ENCODE measurements at regions of chr1 and their contacts with region 1.

Region 1: DNA sequence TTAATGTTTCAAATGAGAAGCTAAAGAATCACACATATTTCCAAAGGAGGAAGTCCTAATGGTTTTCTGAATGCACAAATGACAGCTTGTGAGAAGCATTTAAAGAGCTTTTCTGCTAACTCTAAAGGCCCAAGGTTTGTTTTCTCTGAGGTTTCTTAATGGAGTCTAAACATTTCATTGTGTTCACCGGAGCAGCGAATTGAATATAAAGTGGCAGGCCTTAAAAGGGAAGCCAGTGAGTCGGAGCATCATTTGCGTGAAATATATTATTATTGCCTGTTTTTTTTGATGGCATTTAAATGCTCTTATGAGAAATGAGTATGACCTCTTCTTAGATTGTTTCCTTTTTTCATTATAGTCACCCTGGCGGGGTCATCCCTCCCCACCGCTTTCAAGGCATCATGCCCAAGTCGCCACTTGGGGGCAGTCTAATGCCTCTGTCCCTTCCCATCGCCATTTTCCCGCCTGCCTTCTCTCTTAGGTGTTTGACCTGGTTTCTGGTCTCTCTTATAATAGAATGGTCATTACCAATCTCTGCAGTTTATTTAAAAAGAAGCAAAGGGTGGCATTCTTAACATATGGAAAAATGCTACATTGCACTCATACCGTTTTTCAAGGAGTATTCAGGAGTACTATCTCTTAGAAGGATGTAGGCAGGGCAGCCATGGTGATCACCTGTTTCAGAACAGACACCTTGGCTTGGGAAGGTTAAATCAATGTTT is 25.3 kb upstream of the OVAAL start:
- DNase-seq: peak; percentile 52 to 85 (median 75)
- ATAC-seq: peak; percentile 86
- H3K4me3 ChIP-seq: no peak overlapping the region
- H3K4me1 ChIP-seq: no peaks in the 10 kb centered on the region
- CTCF ChIP-seq: peak; percentile 70

Region 2: DNA sequence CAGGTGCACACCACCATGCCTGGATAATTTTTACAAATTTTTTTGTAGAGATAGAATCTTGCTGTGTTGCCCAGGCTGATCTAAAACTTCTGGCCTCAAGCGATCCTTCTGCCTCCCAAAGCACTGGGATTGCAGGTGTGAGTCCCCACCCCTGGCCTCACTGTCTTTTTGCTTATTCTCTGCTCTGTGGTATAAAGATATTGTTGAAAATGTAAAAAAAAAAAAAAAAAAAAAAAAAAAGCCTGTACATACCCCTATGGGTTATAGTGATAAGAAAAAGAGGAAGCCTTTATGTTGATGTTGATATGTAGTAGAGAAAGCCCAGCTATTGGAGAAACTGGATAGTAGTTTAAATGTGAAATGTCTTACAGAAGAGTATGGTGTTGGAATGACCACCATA is 224.2 kb after region 1 on chr1:
- intact Hi-C with region 1: no loop called
- DNase-seq: no peak
- ATAC-seq: no peak
- H3K4me3 ChIP-seq: no peak overlapping the region
- H3K4me1 ChIP-seq: no peaks in the 10 kb centered on the region
- CTCF ChIP-seq: no peak

Region 3: DNA sequence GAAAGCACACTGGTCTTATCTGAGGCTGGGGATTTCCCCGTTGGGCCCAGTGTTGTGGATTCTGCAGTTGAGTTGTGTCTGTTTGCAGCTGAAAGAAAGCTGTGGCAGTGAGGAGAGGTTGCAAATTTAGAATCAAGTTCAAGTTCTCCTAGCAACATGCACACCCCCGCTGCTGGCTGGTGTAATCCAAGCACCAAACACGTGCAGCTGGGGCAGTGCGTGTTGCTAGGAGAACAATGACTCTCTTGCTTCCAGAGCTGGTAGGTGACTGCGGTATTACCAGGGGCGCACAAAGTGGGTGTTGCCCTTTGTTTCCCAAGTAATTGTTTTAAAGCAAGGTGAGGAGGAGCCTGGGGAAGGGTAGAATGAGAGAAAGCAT is 646.5 kb after region 1 on chr1:
- intact Hi-C with region 1: loop called in 1 of 2 experiments (anchors 10 kb)
- DNase-seq: peak in 1 of 3 donors; percentile 20
- ATAC-seq: peak; percentile 49
- H3K4me3 ChIP-seq: no peak overlapping the region
- H3K4me1 ChIP-seq: no peaks in the 10 kb centered on the region
- CTCF ChIP-seq: no peak

Measured in mucosa of descending colon (tissue), 3 donors.